ENCODE measurements at regions of chr1 and their contacts with region 1.

Region 1: GRCh38 chr1:65036545-65037180 is 70.3 kb upstream of the JAK1 start:
- DNase-seq: no peak
- ATAC-seq: no peak
- H3K4me3 ChIP-seq: no peak overlapping the region
- H3K4me3 Mint-ChIP-seq: no peak overlapping the region
- H3K27ac ChIP-seq: no peak overlapping the region
- H3K27ac Mint-ChIP-seq: peak overlapping the region in 1 of 9 donors; percentile 2
- H3K4me1 ChIP-seq: peaks cover 0 to under 1% of the 10 kb centered on the region in 2 donors
- H3K4me1 Mint-ChIP-seq: peaks cover 5 to 20% (median 14%) of the 10 kb centered on the region in 7 donors
- H3K27me3 ChIP-seq: no peaks in the 10 kb centered on the region
- H3K27me3 Mint-ChIP-seq: peaks cover 0 to 3% (median 0%) of the 10 kb centered on the region in 5 donors

Region 2: GRCh38 chr1:64744492-64745180 is 292.0 kb before region 1 on chr1 and contains the start of gene RAVER2:
- CTCF ChIA-PET with region 1: no interaction called
- POLR2A ChIA-PET with region 1: no interaction called
- intact Hi-C with region 1: loop called (anchors 1 to 2 kb)
- DNase-seq: peak; percentile 41 to 60 (median 48)
- ATAC-seq: peak; percentile 84
- H3K4me3 ChIP-seq: peak within 1 kb of the TSS; percentile 55
- H3K4me3 Mint-ChIP-seq: peak within 1 kb of the TSS; percentile 80 to 98 (median 90)
- H3K27ac ChIP-seq: peak within 1 kb of the TSS; percentile 10
- H3K27ac Mint-ChIP-seq: peak within 1 kb of the TSS in 8 of 9 donors; percentile 28 to 93 (median 82)
- H3K4me1 ChIP-seq: peaks cover 5% of the 10 kb centered on the region in 2 donors
- H3K4me1 Mint-ChIP-seq: peaks cover 11 to 26% (median 16%) of the 10 kb centered on the region in 7 donors
- H3K27me3 ChIP-seq: no peaks in the 10 kb centered on the region
- H3K27me3 Mint-ChIP-seq: peaks cover 0 to 51% (median 6%) of the 10 kb centered on the region in 5 donors
- total RNA-seq, gene RAVER2: 0.29 to 1.9 (median 1.2) TPM

Measured in naive thymus-derived CD4-positive, alpha-beta T cell (primary cell).